ENCODE measurements at regions of chr17 and their contacts with region 1.

Region 1: GRCh38 chr17:12667299-12667958 is 1.7 kb downstream of the MYOCD start:
- DNase-seq: no peak
- ATAC-seq: peak; percentile 76

Region 2: DNA sequence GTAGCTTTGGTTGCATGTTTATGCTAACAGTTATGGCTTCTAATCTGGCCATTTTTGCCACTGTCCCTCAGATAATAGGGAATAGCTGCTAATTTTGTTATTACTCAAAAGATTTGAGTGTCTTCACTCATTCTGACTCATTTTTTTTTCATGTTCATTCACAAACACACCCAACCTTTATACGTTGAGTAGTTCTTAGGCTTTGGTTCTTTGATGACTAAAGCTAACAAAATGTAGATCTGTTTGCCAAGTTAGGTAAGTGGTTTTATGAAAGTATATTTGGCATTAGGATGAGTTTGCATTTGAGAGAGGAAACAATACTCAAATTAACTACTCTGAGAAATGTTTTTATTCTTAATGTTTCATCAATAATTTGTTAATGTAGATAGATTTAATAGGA is 643.1 kb before region 1 on chr17:
- intact Hi-C with region 1: no loop called
- DNase-seq: no peak
- ATAC-seq: no peak

Region 3: DNA sequence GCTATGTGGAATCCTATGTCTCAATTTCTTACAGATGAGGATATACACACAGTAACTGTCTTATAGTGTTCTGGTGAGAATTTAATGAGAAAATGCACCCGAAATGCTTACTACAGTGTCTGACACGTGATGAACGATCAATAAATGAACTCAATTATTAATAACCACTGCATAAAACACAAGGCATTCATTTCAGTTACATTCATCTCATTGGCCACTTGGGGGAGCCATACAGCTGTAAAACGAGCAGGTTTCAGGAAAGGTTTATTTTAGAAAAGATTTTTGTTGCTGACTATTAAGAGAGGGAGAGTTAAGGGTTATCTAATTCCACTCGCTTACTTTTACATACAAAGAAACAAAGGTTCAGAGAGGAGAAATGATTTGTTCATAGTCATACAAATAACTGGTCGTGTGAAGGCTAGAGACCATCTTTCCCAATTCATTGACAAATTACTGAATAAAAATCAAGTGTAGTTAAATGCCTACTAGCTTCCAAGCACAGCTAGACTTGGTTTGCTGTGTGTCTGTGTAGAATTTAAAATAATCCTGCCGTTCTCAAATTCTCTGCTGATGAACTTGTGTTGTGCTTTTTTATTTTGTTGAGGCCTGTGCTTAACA is 486.7 kb before region 1 on chr17:
- intact Hi-C with region 1: loop called (anchors 10 kb)
- DNase-seq: no peak
- ATAC-seq: peak; percentile 64

Region 4: GRCh38 chr17:12256380-12256995 is 410.9 kb before region 1 on chr17:
- intact Hi-C with region 1: loop called (anchors 10 kb)
- DNase-seq: no peak
- ATAC-seq: peak; percentile 84

Region 5: GRCh38 chr17:12545877-12546513 is 121.4 kb before region 1 on chr17:
- intact Hi-C with region 1: loop called (anchors 2 kb)
- DNase-seq: no peak
- ATAC-seq: peak; percentile 86

Region 6: DNA sequence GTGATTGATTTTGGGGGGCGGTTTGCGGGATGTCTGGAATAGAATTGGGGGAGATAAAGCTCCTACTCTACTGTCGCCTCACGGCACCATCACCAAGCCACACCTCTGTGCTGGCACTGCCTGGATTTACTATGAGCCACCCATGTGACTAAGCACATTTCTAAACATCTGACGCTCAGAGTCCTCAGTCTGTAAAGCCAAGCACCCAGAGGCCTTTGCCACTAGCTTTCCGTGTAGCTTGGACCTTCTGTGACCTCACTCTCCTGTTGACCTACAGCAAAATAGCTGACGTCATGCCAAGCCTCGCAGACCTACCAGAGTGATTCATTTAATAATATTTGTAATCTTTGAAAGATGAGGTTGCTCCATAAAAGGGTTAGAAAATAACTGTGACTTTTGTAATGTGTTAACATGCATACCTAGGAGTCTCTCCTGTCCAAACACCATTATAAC is 40.2 kb before region 1 on chr17:
- intact Hi-C with region 1: no loop called
- DNase-seq: no peak
- ATAC-seq: peak; percentile 39

Region 7: DNA sequence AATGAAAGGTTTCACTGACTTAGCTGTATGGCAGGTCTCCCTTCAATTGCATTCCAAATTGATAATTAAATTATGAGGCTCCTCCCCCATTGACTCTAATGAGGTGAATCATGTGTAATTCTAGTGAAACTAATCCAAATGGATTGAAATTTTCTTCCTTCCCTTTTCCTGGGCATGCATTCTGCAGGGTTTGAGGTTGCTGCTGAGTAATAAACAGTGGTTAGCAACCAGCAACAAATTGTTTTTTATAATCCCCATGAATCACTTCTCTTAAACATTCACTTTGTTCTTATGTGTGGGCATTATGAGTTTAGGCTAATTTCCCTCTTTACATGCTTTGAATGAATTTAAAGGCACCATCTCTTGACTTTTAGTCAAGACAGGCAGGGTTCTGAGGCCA is 41.6 kb after region 1 on chr17:
- intact Hi-C with region 1: no loop called
- DNase-seq: no peak
- ATAC-seq: no peak

Region 8: DNA sequence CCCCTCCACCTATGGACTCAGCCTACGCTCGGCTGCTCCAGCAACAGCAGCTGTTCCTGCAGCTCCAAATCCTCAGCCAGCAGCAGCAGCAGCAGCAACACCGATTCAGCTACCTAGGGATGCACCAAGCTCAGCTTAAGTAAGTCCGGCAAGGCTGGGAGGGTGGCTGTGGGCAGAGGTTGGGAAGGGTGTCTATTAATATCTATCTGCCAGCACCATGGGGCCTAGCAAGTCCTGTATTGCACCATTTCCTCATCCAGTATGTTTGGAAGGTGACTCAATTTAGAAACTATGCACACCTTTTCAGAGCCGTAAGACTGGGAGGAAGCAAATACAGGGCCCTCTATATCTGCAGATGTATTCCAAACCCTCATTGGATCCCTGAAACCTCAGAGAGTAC is 76.9 kb after region 1 on chr17:
- intact Hi-C with region 1: loop called (anchors 5 kb)
- DNase-seq: peak; percentile 63
- ATAC-seq: peak; percentile 89

Region 9: GRCh38 chr17:12985431-12986293 is 318.2 kb after region 1 on chr17:
- intact Hi-C with region 1: loop called (anchors 5 kb)
- DNase-seq: no peak
- ATAC-seq: peak; percentile 61

Region 10: GRCh38 chr17:13024526-13025257 is 357.3 kb after region 1 on chr17:
- intact Hi-C with region 1: no loop called
- DNase-seq: peak; percentile 76
- ATAC-seq: peak; percentile 97